Kidney (tissue), 22 donors: ENCODE measurements at regions of chr3 and their contacts with region 1.

Region 1: DNA sequence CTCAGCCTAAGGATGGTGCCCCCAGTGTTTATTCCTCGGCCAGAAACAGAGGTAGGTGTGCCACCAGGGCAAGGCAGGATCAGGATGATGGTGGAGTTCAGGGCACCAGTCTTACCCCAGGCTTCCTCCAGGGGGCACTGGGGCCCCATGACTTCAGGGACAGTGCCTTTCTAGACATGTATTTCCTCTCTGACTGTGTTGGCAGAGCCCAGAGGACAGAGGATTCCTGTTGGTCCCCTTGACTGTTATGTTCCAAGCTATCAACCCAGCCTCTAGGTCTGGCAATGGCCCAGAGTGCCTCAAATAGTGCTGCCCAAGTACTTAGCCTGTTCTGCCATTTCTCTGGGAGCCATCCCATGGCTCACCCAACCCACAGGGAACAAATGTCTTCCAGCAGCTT is 2.8 kb downstream of the HEMK1 start:
- DNase-seq: peak; percentile 70 to 87 (median 83)
- H3K4me3 ChIP-seq: no peak overlapping the region
- H3K27ac ChIP-seq: peak overlapping the region; percentile 23 to 62
- H3K4me1 ChIP-seq: peaks cover 0 to 28% (median 25%) of the 10 kb centered on the region in 3 donors
- H3K27me3 ChIP-seq: no peaks in the 10 kb centered on the region
- CTCF ChIP-seq: peak; percentile 96

Region 2: DNA sequence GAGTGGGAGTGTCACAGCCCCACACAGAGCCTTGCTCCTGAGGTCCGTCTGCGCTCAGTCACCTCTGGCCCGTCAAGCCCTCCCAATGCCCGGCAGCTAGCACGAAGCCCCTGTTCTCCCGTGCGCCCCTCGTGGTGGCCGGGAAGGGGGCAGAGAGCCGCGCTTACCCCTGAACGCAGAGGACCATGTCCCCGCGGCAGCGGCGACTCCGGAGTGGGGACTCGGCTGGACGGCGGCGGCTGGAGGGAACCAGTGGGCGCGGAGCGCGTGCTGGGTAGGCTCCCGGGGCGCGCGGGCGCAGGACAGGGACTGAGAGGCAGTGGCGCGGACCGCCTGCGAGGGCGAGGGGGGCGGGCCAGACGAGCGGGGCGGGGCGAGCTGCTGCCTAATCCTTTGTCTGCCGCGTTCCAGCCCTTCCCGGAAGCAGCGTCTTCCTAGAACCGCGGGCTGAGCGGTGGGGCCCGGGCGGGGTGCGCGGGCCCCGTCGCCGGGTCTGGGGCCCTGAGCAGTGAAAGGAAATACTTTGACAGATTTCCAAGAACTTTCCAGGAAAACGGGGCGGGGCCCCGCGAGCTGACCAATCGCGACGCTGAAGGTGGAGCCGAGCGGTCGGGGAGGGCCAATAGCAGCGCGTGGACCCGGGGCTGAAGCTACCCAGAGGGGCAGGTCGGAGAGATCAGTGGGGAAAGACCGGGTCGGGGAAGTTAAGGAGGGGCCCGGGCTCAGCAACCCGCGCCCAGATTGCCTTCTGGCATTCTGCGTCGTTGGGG is 39.5 kb after region 1 on chr3 and contains the start of gene CISH:
- intact Hi-C with region 1: loop called (anchors 5 kb)
- DNase-seq: peak; percentile 97 to 99 (median 99)
- H3K4me3 ChIP-seq: peak within 1 kb of the TSS; percentile 79 to 95 (median 93)
- H3K27ac ChIP-seq: peak within 1 kb of the TSS; percentile 98 to 99
- H3K4me1 ChIP-seq: peaks cover 5 to 37% (median 35%) of the 10 kb centered on the region in 3 donors
- H3K27me3 ChIP-seq: no peaks in the 10 kb centered on the region
- CTCF ChIP-seq: peak; percentile 2
- total RNA-seq, gene CISH: 30.8 TPM

Region 3: GRCh38 chr3:50671331-50671730 is 99.2 kb after region 1 on chr3:
- intact Hi-C with region 1: no loop called
- DNase-seq: no peak
- H3K4me3 ChIP-seq: no peak overlapping the region
- H3K27ac ChIP-seq: no peak overlapping the region
- H3K4me1 ChIP-seq: no peaks in the 10 kb centered on the region
- H3K27me3 ChIP-seq: peaks cover 25% of the 10 kb centered on the region
- CTCF ChIP-seq: no peak